ENCODE measurements at regions of chr2 and their contacts with region 1.

Region 1: GRCh38 chr2:127106951-127107621 is at the start of gene BIN1:
- DNase-seq: peak; percentile 81
- ATAC-seq: peak; percentile 84
- H3K4me3 ChIP-seq: peak within 1 kb of the TSS; percentile 23 to 91 (median 69)
- H3K4me3 Mint-ChIP-seq: peak within 1 kb of the TSS; percentile 88
- H3K27ac ChIP-seq: peak within 1 kb of the TSS in 1 of 2 donors; percentile 33
- H3K27ac Mint-ChIP-seq: no peak within 1 kb of the TSS
- H3K4me1 ChIP-seq: peaks cover 21 to 29% of the 10 kb centered on the region in 2 donors
- H3K4me1 Mint-ChIP-seq: peaks cover 13% of the 10 kb centered on the region
- H3K27me3 ChIP-seq: peaks cover 0 to 26% (median 7%) of the 10 kb centered on the region in 4 experiments
- H3K27me3 Mint-ChIP-seq: peaks cover 9% of the 10 kb centered on the region
- CTCF ChIP-seq: no peak
- total RNA-seq, gene BIN1: 90.6 and 93.9 TPM in 2 replicates

Region 2: GRCh38 chr2:126761981-126762878 is 344.9 kb before region 1 on chr2:
- CTCF ChIA-PET with region 1: no interaction called
- POLR2A ChIA-PET with region 1: no interaction called
- intact Hi-C with region 1: no loop called
- DNase-seq: no peak
- ATAC-seq: no peak
- H3K4me3 ChIP-seq: no peak overlapping the region
- H3K4me3 Mint-ChIP-seq: no peak overlapping the region
- H3K27ac ChIP-seq: no peak overlapping the region
- H3K27ac Mint-ChIP-seq: no peak overlapping the region
- H3K4me1 ChIP-seq: peaks cover 4 to 8% of the 10 kb centered on the region in 2 donors
- H3K4me1 Mint-ChIP-seq: peaks cover 10% of the 10 kb centered on the region
- H3K27me3 ChIP-seq: peaks cover 0 to 5% (median 0%) of the 10 kb centered on the region in 4 experiments
- H3K27me3 Mint-ChIP-seq: peaks cover 30% of the 10 kb centered on the region
- CTCF ChIP-seq: no peak

Region 3: GRCh38 chr2:127081826-127082633 is 25.1 kb before region 1 on chr2:
- CTCF ChIA-PET with region 1: interaction called, 11 read pairs
- POLR2A ChIA-PET with region 1: interaction called, 7 read pairs
- intact Hi-C with region 1: loop called (anchors 1 kb)
- DNase-seq: peak; percentile 84
- ATAC-seq: peak; percentile 65
- H3K4me3 ChIP-seq: peak overlapping the region in 4 of 5 experiments; percentile 65 to 88 (median 82)
- H3K4me3 Mint-ChIP-seq: peak overlapping the region; percentile 92
- H3K27ac ChIP-seq: peak overlapping the region; percentile 96 to 98
- H3K27ac Mint-ChIP-seq: peak overlapping the region; percentile 99
- H3K4me1 ChIP-seq: peaks cover 78 to 95% of the 10 kb centered on the region in 2 donors
- H3K4me1 Mint-ChIP-seq: peaks cover 94% of the 10 kb centered on the region
- H3K27me3 ChIP-seq: no peaks in the 10 kb centered on the region
- H3K27me3 Mint-ChIP-seq: no peaks in the 10 kb centered on the region
- CTCF ChIP-seq: no peak

Region 4: DNA sequence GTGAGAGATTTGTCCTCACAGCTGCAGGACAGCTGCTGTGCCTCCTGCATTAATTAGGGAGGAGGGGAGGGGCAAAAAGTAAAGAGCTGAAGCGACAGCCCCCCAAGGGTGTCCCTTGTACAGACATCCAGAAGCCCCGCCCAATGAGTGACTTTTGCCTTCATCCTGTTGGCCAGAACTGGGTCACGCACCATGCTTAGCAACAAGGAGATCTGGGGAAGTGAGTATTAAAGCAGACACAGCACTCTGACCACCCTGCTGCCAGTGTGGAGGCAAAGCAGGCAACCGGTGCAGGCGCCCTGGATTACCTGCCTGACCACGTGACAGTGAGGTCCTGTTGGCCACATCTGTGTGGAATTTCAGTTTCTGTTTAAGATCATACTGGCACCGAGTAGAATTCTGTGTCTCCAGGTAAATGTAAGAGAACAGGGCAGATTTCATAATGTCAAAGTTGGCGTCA is 21.4 kb after region 1 on chr2:
- CTCF ChIA-PET with region 1: no interaction called
- POLR2A ChIA-PET with region 1: no interaction called
- intact Hi-C with region 1: loop called (anchors 2 kb)
- DNase-seq: peak; percentile 58
- ATAC-seq: peak; percentile 86
- H3K4me3 ChIP-seq: no peak overlapping the region
- H3K4me3 Mint-ChIP-seq: peak overlapping the region; percentile 67
- H3K27ac ChIP-seq: no peak overlapping the region
- H3K27ac Mint-ChIP-seq: peak overlapping the region; percentile 56
- H3K4me1 ChIP-seq: peaks cover 15 to 17% of the 10 kb centered on the region in 2 donors
- H3K4me1 Mint-ChIP-seq: peaks cover 18% of the 10 kb centered on the region
- H3K27me3 ChIP-seq: no peaks in the 10 kb centered on the region
- H3K27me3 Mint-ChIP-seq: no peaks in the 10 kb centered on the region
- CTCF ChIP-seq: no peak

Region 5: DNA sequence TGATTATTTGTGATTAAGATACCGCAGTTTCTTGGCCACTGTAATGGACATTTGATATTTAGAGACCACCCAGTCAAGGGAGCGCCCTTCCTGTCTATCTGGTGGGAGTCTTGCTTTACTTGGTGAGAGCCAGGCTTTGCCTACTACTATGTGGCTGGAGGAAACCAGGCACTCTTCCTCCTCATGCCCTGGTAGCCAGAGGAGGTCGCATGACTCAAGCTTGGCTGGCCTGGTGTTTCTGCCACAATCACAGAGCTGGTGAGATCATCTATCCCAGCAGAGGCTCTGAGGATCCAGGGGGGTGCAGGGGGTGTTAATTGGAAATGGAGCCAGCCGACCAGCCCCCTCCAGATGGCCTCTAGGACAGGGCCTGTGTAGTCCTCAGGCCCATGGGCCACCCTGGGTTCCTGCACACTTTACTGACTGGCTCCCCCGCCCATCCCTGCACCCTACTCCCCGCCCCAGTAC is 46.6 kb after region 1 on chr2:
- CTCF ChIA-PET with region 1: no interaction called
- POLR2A ChIA-PET with region 1: no interaction called
- intact Hi-C with region 1: no loop called
- DNase-seq: no peak
- ATAC-seq: no peak
- H3K4me3 ChIP-seq: no peak overlapping the region
- H3K4me3 Mint-ChIP-seq: no peak overlapping the region
- H3K27ac ChIP-seq: no peak overlapping the region
- H3K27ac Mint-ChIP-seq: no peak overlapping the region
- H3K4me1 ChIP-seq: peaks cover 10 to 17% of the 10 kb centered on the region in 2 donors
- H3K4me1 Mint-ChIP-seq: peaks cover 15% of the 10 kb centered on the region
- H3K27me3 ChIP-seq: no peaks in the 10 kb centered on the region
- H3K27me3 Mint-ChIP-seq: no peaks in the 10 kb centered on the region
- CTCF ChIP-seq: no peak

Measured in B cell (primary cell).